Adrenal gland (tissue), 19 donors: ENCODE measurements at regions of chr4 and their contacts with region 1.

Region 1: DNA sequence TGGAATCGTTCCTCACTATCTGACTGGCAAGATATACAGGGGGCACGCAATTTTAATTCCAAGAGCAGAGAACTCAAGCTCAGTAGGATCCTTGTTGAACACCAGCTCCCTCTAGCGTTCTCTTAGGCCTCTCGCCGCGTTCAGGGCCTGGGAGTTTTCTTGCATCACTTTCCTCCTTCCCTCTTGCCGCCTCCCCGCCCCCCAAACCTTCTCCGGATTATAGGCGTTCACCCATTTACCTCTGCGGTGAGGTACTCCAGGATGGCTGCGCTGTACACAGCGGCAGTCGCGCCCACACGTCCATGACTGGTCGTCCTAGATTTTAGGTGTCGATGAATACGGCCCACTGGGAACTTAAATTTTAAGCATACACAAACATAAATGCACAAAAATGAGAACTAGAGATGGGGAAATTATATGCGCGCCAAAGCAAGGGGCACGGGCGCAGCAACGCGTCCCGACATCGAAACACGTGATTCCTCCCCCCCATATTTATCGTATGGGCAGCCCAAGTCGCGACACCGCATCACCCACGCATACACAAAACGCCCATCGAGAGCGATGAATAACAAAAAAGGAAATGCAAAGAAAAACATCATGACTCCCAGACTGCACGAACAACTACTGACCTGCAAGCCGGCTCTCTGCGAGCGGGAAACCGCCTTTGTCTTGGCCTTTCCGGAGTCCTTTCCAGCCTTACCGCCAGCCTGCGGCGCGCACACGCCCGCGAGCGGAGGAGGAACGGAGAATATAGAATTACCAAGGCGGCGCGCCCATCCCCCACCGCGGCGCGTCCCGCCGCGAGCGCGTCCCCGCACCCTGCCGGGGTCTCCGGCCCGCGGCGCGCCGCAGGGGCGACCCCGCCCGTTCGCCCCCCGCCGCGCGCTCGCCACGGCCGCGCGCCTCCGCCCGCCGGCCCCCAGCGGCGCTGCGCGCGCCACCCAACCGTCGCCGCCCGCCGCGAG is 759 bp downstream of the H2AZ1 start:
- DNase-seq: peak; percentile 87 to 96 (median 91)
- H3K4me3 ChIP-seq: peak overlapping the region; percentile 11 to 69 (median 44)
- H3K27ac ChIP-seq: peak overlapping the region; percentile 57 to 93 (median 88)
- H3K4me1 ChIP-seq: peaks cover 5 to 35% of the 10 kb centered on the region in 2 donors
- H3K27me3 ChIP-seq: no peaks in the 10 kb centered on the region
- CTCF ChIP-seq: peak; percentile 70 to 93 (median 82)
- POLR2A ChIP-seq: peak in 1 of 2 donors; percentile 18

Region 2: GRCh38 chr4:99563310-99564186 is 385.8 kb before region 1 on chr4 and contains the start of gene TRMT10A:
- intact Hi-C with region 1: loop called in 1 of 2 experiments (anchors 10 kb)
- DNase-seq: peak; percentile 96 to 99 (median 99)
- H3K4me3 ChIP-seq: peak within 1 kb of the TSS; percentile 48 to 74 (median 62)
- H3K27ac ChIP-seq: peak within 1 kb of the TSS; percentile 93 to 97 (median 97)
- H3K4me1 ChIP-seq: peaks cover 4 to 5% of the 10 kb centered on the region in 2 donors
- H3K27me3 ChIP-seq: no peaks in the 10 kb centered on the region
- CTCF ChIP-seq: peak in 3 of 6 experiments; percentile 18 to 31 (median 28)
- POLR2A ChIP-seq: peak; percentile 64 to 77
- total RNA-seq, gene TRMT10A: 2.1 to 20.4 (median 6.4) TPM

Region 3: GRCh38 chr4:99816545-99817308 is 132.6 kb before region 1 on chr4 and contains the start of gene DAPP1:
- intact Hi-C with region 1: loop called in 1 of 2 experiments (anchors 5 kb)
- DNase-seq: peak in 6 of 7 donors; percentile 8 to 56 (median 22)
- H3K4me3 ChIP-seq: peak within 1 kb of the TSS in 1 of 4 donors; percentile 45
- H3K27ac ChIP-seq: peak within 1 kb of the TSS in 1 of 5 donors; percentile 70
- H3K4me1 ChIP-seq: no peaks in the 10 kb centered on the region
- H3K27me3 ChIP-seq: no peaks in the 10 kb centered on the region
- CTCF ChIP-seq: no peak
- POLR2A ChIP-seq: no peak
- total RNA-seq, gene DAPP1: 0.42 to 3.7 (median 1.8) TPM

Region 4: DNA sequence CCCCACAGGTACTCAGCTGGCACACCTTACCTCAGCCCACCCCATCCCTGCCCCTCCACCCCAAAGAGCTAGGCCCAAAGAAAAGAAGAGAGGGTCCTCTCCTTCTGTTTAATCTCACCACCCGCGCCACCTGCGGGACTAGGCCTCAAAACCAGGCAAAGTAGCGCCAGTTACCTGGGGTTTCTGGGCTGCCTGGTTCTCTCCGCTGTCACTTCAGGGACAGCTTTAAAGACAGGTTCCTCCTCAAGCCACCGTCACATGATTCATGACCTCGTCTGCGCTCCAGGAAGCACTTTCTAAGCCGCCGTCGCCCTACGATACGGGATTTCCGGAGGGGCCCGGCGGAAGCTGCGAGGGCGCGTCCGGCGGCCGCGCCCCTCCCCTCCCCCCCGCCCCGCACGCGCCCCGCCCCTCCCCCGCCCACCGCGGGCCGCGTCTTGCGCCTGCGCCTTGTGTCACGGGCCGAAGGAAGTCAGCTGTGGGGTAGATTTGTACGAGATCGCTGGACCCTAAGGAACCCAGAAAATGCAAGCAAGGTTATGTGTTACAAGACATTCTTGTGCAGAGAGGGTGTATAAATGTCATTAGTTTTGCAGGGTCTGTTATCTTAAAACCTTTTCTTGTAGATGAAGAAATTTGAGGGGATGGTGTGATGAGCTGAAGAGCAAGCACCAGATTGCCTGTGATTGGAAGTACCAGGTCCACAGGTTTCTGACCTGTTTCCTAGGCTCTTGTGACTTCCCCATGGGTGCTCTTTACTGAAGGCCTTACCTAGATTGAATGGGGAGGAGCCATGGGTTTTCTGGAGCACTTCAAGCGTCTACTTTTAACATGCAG is 54.9 kb before region 1 on chr4 and contains the start of gene LAMTOR3:
- intact Hi-C with region 1: loop called in 1 of 2 experiments (anchors 10 kb)
- DNase-seq: peak; percentile 89 to 97 (median 93)
- H3K4me3 ChIP-seq: peak within 1 kb of the TSS; percentile 73 to 99 (median 95)
- H3K27ac ChIP-seq: peak within 1 kb of the TSS in 4 of 5 donors; percentile 59 to 87 (median 80)
- H3K4me1 ChIP-seq: peaks cover 12 to 32% of the 10 kb centered on the region in 2 donors
- H3K27me3 ChIP-seq: no peaks in the 10 kb centered on the region
- CTCF ChIP-seq: no peak
- POLR2A ChIP-seq: peak in 1 of 2 donors; percentile 58
- total RNA-seq, gene LAMTOR3: 24.2 to 80.1 (median 46.1) TPM